ENCODE measurements at regions of chr6 and their contacts with region 1.

Region 1: GRCh38 chr6:113858480-113859348 is 1.6 kb downstream of the MARCKS start:
- DNase-seq: peak; percentile 44 to 93 (median 74)
- ATAC-seq: peak; percentile 89
- H3K4me3 ChIP-seq: peak overlapping the region; percentile 55
- H3K4me3 Mint-ChIP-seq: peak overlapping the region in 6 of 10 donors; percentile 53 to 73 (median 60)
- H3K27ac ChIP-seq: no peak overlapping the region
- H3K27ac Mint-ChIP-seq: peak overlapping the region in 3 of 9 donors; percentile 62 to 71 (median 65)
- H3K4me1 ChIP-seq: peaks cover 18 to 40% of the 10 kb centered on the region in 2 donors
- H3K4me1 Mint-ChIP-seq: peaks cover 5 to 14% (median 9%) of the 10 kb centered on the region in 7 donors
- H3K27me3 ChIP-seq: peaks cover 15 to 44% of the 10 kb centered on the region in 2 donors
- H3K27me3 Mint-ChIP-seq: peaks cover 21 to 36% (median 31%) of the 10 kb centered on the region in 5 donors

Region 2: DNA sequence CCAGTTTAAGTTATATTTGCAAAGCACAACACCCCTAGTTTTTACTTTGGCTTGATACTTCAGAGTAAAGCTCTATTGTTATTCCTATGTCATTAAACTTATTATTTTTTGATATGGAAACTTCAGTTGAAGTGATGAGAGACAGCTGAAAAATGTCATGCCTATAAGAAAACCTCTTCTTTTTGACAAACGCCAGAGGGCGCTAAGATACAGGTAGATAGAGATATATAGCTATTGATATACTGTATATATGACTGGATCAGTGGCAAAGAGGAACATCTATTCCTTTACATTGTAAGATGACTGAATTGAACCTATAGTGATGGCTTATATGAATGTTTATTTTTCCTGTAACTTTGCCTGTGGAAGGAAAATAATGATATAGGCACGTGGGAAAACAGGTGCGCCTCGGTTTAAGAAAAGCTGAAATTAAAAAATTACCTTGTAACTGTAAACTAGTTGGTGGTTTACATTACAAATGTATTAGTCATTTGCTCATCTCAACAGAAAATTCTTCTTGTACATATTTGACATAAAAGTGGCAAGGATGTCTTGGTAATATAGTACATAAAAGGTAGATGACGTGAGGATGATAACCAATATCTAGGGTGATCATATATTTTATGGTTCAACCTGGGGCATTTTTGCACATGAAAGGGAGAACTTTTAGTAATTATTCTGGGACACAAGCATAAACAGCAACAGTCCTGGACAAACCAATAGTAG is 1678.5 kb before region 1 on chr6:
- CTCF ChIA-PET with region 1: interaction called, 4 read pairs
- POLR2A ChIA-PET with region 1: no interaction called
- intact Hi-C with region 1: loop called (anchors 1 kb)
- DNase-seq: peak in 7 of 9 donors; percentile 30 to 75 (median 59)
- ATAC-seq: peak; percentile 72
- H3K4me3 ChIP-seq: no peak overlapping the region
- H3K4me3 Mint-ChIP-seq: no peak overlapping the region
- H3K27ac ChIP-seq: no peak overlapping the region
- H3K27ac Mint-ChIP-seq: no peak overlapping the region
- H3K4me1 ChIP-seq: no peaks in the 10 kb centered on the region
- H3K4me1 Mint-ChIP-seq: no peaks in the 10 kb centered on the region
- H3K27me3 ChIP-seq: no peaks in the 10 kb centered on the region
- H3K27me3 Mint-ChIP-seq: peaks cover 6 to 43% (median 38%) of the 10 kb centered on the region in 5 donors

Region 3: GRCh38 chr6:112289038-112289566 is 1569.6 kb before region 1 on chr6:
- CTCF ChIA-PET with region 1: no interaction called
- POLR2A ChIA-PET with region 1: no interaction called
- intact Hi-C with region 1: loop called in 1 of 2 experiments (anchors 5 kb)
- DNase-seq: no peak
- ATAC-seq: no peak
- H3K4me3 ChIP-seq: no peak overlapping the region
- H3K4me3 Mint-ChIP-seq: no peak overlapping the region
- H3K27ac ChIP-seq: no peak overlapping the region
- H3K27ac Mint-ChIP-seq: peak overlapping the region in 1 of 9 donors; percentile 38
- H3K4me1 ChIP-seq: peaks cover 0 to 17% of the 10 kb centered on the region in 2 donors
- H3K4me1 Mint-ChIP-seq: peaks cover 0 to 29% (median 9%) of the 10 kb centered on the region in 7 donors
- H3K27me3 ChIP-seq: peaks cover 0 to 3% of the 10 kb centered on the region in 2 donors
- H3K27me3 Mint-ChIP-seq: peaks cover 14 to 64% (median 32%) of the 10 kb centered on the region in 5 donors

Region 4: DNA sequence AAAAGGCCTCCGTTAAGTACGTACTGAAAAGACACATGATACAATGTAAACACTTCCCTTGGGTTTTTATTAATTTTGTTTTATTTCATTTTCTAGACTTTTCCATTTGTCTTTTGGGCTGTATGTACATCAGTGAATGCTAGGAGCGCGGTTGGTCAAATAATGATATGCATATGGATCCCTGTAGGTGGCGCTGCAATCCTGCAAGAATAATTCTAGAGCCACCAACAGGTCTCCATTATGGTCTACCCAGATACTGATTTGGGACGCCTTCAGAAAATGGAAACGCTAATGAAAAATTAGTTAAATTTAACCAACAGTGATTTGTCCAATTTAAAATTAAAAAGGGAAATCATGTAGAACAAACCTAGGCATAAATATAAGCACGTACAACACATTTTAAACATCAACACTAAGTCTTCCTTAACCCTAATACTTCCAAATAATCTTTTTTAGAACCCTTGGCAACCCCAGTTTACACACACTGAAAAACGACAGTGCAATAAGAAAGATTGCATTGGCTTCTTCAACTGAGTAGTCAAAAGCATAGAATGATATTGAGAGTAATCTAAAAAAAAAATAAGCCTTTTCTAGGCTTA is 1078.1 kb before region 1 on chr6:
- CTCF ChIA-PET with region 1: no interaction called
- POLR2A ChIA-PET with region 1: no interaction called
- intact Hi-C with region 1: loop called in 1 of 2 experiments (anchors 2 kb)
- DNase-seq: no peak
- ATAC-seq: peak; percentile 66
- H3K4me3 ChIP-seq: no peak overlapping the region
- H3K4me3 Mint-ChIP-seq: no peak overlapping the region
- H3K27ac ChIP-seq: no peak overlapping the region
- H3K27ac Mint-ChIP-seq: no peak overlapping the region
- H3K4me1 ChIP-seq: no peaks in the 10 kb centered on the region
- H3K4me1 Mint-ChIP-seq: no peaks in the 10 kb centered on the region
- H3K27me3 ChIP-seq: no peaks in the 10 kb centered on the region
- H3K27me3 Mint-ChIP-seq: peaks cover 0 to 2% (median 0%) of the 10 kb centered on the region in 5 donors

Region 5: DNA sequence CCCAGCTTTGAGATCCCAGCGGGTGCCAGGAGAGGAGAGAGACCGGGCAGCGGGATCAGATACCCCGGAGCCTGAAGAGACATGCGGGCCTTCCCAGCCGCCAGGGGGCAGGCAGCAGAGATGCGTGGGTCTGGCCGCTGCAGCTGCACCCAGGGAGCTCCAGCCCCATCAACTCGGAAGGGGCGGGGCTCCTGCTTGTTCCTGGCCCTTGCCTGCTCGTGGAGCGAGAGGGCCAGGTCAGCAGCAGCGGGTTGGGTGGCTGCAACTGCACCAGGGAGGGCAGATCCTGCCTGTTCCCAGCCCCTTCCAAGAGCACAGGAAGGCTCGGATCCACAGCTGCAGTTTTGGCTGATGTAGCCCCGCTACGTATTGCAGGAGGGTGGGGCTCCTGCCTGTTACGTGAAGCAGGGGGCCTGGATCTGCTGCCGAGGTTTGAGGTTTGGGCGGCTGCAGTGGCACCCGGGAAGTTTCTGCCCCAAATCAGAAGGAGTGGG is 978.7 kb before region 1 on chr6:
- CTCF ChIA-PET with region 1: no interaction called
- POLR2A ChIA-PET with region 1: no interaction called
- intact Hi-C with region 1: loop called in 1 of 2 experiments (anchors 2 kb)
- DNase-seq: peak in 3 of 9 donors; percentile 8 to 31 (median 13)
- ATAC-seq: peak; percentile 36
- H3K4me3 ChIP-seq: no peak overlapping the region
- H3K4me3 Mint-ChIP-seq: peak overlapping the region in 5 of 10 donors; percentile 42 to 60 (median 53)
- H3K27ac ChIP-seq: no peak overlapping the region
- H3K27ac Mint-ChIP-seq: no peak overlapping the region
- H3K4me1 ChIP-seq: no peaks in the 10 kb centered on the region
- H3K4me1 Mint-ChIP-seq: no peaks in the 10 kb centered on the region
- H3K27me3 ChIP-seq: no peaks in the 10 kb centered on the region
- H3K27me3 Mint-ChIP-seq: no peaks in the 10 kb centered on the region

Region 6: DNA sequence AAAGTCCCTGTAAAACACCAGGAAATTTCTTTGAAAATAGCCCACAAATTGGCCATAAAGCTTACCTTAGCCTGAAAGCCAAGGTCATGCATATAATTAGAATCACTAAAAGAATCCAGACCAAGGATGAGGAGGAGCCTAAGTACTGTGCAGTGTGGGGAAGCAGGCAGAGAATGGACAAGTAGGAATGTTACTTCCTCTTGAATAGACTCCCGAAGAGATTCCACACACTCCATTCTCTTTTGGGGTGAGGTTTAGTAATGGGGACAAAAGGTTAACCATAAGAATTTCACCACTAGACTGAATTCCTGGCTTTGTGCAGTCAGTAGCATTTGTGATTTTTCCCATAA is 29.0 kb before region 1 on chr6:
- CTCF ChIA-PET with region 1: no interaction called
- POLR2A ChIA-PET with region 1: no interaction called
- intact Hi-C with region 1: no loop called
- DNase-seq: no peak
- ATAC-seq: no peak
- H3K4me3 ChIP-seq: no peak overlapping the region
- H3K4me3 Mint-ChIP-seq: no peak overlapping the region
- H3K27ac ChIP-seq: no peak overlapping the region
- H3K27ac Mint-ChIP-seq: no peak overlapping the region
- H3K4me1 ChIP-seq: no peaks in the 10 kb centered on the region
- H3K4me1 Mint-ChIP-seq: no peaks in the 10 kb centered on the region
- H3K27me3 ChIP-seq: no peaks in the 10 kb centered on the region
- H3K27me3 Mint-ChIP-seq: peaks cover 5 to 27% (median 7%) of the 10 kb centered on the region in 5 donors

Region 7: GRCh38 chr6:113970805-113971676 is 112.3 kb after region 1 on chr6 and contains the start of gene HDAC2:
- CTCF ChIA-PET with region 1: no interaction called
- POLR2A ChIA-PET with region 1: no interaction called
- intact Hi-C with region 1: loop called (anchors 2 kb)
- DNase-seq: peak; percentile 77 to 91 (median 85)
- ATAC-seq: peak; percentile 90
- H3K4me3 ChIP-seq: peak within 1 kb of the TSS; percentile 96
- H3K4me3 Mint-ChIP-seq: peak within 1 kb of the TSS; percentile 91 to 99 (median 97)
- H3K27ac ChIP-seq: peak within 1 kb of the TSS; percentile 92
- H3K27ac Mint-ChIP-seq: peak within 1 kb of the TSS; percentile 86 to 99 (median 97)
- H3K4me1 ChIP-seq: peaks cover 15 to 18% of the 10 kb centered on the region in 2 donors
- H3K4me1 Mint-ChIP-seq: peaks cover 24 to 46% (median 39%) of the 10 kb centered on the region in 7 donors
- H3K27me3 ChIP-seq: no peaks in the 10 kb centered on the region
- H3K27me3 Mint-ChIP-seq: peaks cover 0 to 6% (median 0%) of the 10 kb centered on the region in 5 donors
- total RNA-seq, gene HDAC2: 46.6 to 72.0 (median 54.7) TPM

Measured in naive thymus-derived CD4-positive, alpha-beta T cell (primary cell).